ENCODE measurements at regions of chr9 and their contacts with region 1.

Region 1: GRCh38 chr9:114587385-114588202 is at the start of gene ATP6V1G1:
- DNase-seq: peak; percentile 100
- ATAC-seq: peak; percentile 100
- total RNA-seq, gene ATP6V1G1: 58.0 TPM

Region 2: DNA sequence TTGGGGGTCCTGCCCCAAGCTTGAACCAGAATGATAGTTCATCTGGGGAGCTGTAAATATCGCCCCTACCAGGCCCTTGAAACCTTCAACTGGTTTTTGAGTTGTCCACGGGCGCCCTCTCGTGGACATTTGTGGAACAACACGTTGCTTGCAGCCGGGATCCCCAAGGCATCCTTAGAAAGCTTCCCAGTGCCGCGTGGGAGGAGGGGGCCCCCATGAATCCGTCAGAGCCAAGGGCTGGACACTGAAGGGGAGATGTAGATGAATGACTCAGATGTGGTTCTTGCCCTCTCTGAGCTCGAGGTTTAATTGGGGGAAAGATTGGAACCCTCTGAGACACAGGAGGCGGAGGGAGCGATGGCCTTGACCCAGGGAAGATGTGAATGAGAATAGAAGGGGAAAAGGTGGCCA is 296.5 kb before region 1 on chr9:
- intact Hi-C with region 1: no loop called
- DNase-seq: peak; percentile 87
- ATAC-seq: peak; percentile 58

Region 3: GRCh38 chr9:114397848-114398605 is 189.6 kb before region 1 on chr9:
- intact Hi-C with region 1: loop called (anchors 10 kb)
- DNase-seq: peak; percentile 99
- ATAC-seq: peak; percentile 95

Region 4: GRCh38 chr9:114606597-114607207 is 19.1 kb after region 1 on chr9:
- intact Hi-C with region 1: loop called (anchors 2 kb)
- DNase-seq: no peak
- ATAC-seq: no peak

Region 5: DNA sequence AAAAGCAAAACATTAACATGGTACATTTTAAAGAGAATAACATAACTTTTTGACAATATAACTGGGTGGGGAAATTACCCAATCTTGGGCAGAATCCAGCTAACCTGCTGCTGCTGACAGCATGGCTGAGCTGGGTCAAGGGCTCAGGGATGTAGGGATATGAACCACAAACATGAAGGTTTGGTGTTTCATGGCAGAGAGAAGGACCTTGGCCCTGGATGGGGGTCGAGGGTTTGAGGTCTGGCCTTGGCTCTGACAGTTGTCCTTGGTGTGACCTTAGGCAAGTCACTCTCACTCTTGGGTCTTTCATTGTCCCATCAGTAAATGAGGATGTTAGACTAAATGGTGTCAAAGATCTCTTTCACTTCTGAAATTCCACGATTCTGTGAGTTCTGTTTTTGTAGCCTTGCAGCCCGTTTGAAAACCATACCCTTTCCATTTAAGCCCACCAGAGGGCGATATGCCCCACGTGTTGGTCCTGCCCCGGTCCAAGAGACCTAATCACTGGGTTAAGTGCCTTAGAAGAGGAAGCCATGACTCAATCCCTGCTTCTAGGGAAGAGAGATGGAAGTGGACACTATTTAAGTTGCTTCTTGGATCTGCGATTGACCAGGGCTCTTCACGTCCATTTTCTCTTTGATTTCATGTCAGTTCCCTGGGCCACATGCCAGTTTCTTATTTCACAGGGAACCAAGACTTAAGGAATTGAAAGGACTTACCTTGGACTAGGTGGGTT is 151.2 kb after region 1 on chr9:
- intact Hi-C with region 1: no loop called
- DNase-seq: peak; percentile 77
- ATAC-seq: peak; percentile 79